Right cardiac atrium (tissue), 5 donors: ENCODE measurements at regions of chr19 and their contacts with region 1.

Region 1: GRCh38 chr19:38831142-38831605 is 420 bp downstream of the ECH1 start:
- DNase-seq: peak; percentile 74 to 87 (median 86)
- ATAC-seq: peak; percentile 59 to 63
- H3K4me3 ChIP-seq: peak overlapping the region; percentile 74
- H3K27ac ChIP-seq: peak overlapping the region; percentile 97
- H3K4me1 ChIP-seq: peaks cover 10% of the 10 kb centered on the region
- H3K27me3 ChIP-seq: no peaks in the 10 kb centered on the region

Region 2: GRCh38 chr19:38632476-38633213 is 198.5 kb before region 1 on chr19:
- intact Hi-C with region 1: no loop called
- DNase-seq: peak in 2 of 3 donors; percentile 30 to 46
- ATAC-seq: no peak
- H3K4me3 ChIP-seq: no peak overlapping the region
- H3K27ac ChIP-seq: no peak overlapping the region
- H3K4me1 ChIP-seq: no peaks in the 10 kb centered on the region
- H3K27me3 ChIP-seq: no peaks in the 10 kb centered on the region

Region 3: DNA sequence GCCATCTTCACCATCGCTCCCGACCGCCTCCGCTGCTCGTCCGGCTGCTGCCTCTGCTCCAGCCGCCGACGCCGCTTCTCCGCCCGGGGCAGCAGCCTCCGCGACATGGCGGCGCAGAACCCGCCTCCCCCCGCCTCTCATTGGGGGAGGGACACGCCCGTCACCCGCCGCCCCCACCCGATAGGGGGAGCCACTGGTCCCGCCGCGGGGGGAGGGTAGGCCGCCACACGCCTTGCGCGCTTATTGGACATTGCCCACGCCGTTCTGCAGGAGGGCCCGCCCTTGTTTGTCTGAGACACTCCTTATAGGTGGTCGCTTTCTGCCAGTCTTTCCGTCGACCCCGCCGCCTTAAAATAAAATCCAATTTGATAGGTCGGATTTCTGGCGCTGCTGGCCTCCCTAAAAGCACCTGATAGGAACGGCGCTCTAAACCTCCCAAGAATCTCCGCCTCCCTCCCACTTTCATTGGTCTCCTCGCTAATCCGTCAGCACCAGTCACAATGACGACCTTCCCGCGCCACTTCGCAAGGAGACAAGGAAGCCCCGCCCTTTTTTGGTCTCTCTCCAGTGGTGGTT is 18.8 kb after region 1 on chr19 and contains the start of gene HNRNPL:
- intact Hi-C with region 1: loop called in 1 of 4 experiments (anchors 2 kb)
- DNase-seq: peak; percentile 99 to 100 (median 100)
- ATAC-seq: peak; percentile 82 to 85
- H3K4me3 ChIP-seq: peak within 1 kb of the TSS; percentile 68
- H3K27ac ChIP-seq: peak within 1 kb of the TSS; percentile 99
- H3K4me1 ChIP-seq: peaks cover 8% of the 10 kb centered on the region
- H3K27me3 ChIP-seq: no peaks in the 10 kb centered on the region
- total RNA-seq, gene HNRNPL: 146 to 206 (median 178) TPM

Region 4: DNA sequence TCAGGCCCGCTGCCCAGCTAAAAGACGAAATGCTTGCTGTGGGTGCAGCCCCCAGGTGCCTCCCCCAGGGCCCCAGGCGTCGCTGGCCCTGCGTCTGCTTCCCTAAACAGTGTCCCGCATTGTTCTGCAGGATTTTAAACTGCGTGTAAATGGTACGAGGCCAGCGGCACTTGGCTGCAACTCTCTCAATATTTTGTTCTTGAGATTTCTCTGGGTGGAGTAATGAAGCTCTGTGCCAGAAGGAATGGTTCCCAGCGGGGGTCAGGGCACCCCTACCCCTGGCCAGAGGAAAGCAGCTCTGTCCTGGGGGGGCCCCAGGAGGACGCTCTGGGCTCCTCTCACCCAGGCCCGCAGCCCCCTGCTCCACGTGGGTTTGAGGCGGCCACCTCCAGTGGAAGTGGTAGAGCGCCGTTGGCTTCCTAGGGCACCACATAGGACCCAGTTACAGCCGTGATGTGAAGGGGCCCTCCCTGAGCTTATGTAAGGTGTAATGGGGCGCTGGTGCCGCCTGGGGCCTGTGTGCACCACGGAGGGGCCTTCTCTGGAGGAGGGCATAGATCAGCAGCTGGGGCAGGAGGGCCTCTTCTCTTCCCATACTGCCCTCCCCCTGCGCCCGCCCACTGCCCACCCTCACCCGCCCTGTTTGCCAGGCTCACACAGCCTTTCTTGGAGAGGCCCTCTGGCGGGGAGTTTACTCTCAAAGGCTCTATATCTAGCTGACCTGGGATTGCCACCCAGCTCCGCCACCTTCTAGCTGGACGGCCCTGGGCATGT is 314.2 kb after region 1 on chr19:
- intact Hi-C with region 1: no loop called
- DNase-seq: peak; percentile 41 to 84 (median 77)
- ATAC-seq: peak; percentile 73 to 78
- H3K4me3 ChIP-seq: no peak overlapping the region
- H3K27ac ChIP-seq: peak overlapping the region; percentile 68
- H3K4me1 ChIP-seq: peaks cover 9% of the 10 kb centered on the region
- H3K27me3 ChIP-seq: no peaks in the 10 kb centered on the region